ENCODE measurements at regions of chr11 and their contacts with region 1.

Region 1: GRCh38 chr11:6298605-6299004 is 21.7 kb downstream of the CAVIN3 start:
- DNase-seq: peak; percentile 86
- ATAC-seq: peak; percentile 96
- H3K4me3 Mint-ChIP-seq: no peak overlapping the region
- H3K27ac Mint-ChIP-seq: peak overlapping the region; percentile 40; the same call in 1 of the 2 replicates
- H3K4me1 Mint-ChIP-seq: peaks cover 57% of the 10 kb centered on the region
- H3K27me3 Mint-ChIP-seq: no peaks in the 10 kb centered on the region
- CTCF ChIP-seq: peak; percentile 52; the same call in 1 of the 2 replicates

Region 2: GRCh38 chr11:6127881-6128280 is 170.7 kb before region 1 on chr11:
- CTCF ChIA-PET with region 1: no interaction called
- POLR2A ChIA-PET with region 1: no interaction called
- DNase-seq: no peak
- ATAC-seq: no peak
- H3K4me3 Mint-ChIP-seq: no peak overlapping the region
- H3K27ac Mint-ChIP-seq: no peak overlapping the region
- H3K4me1 Mint-ChIP-seq: no peaks in the 10 kb centered on the region
- H3K27me3 Mint-ChIP-seq: no peaks in the 10 kb centered on the region
- CTCF ChIP-seq: no peak

Region 3: GRCh38 chr11:6269994-6270393 is 28.6 kb before region 1 on chr11:
- CTCF ChIA-PET with region 1: interaction called, 20 read pairs
- POLR2A ChIA-PET with region 1: no interaction called
- DNase-seq: peak; percentile 59
- ATAC-seq: peak; percentile 38
- H3K4me3 Mint-ChIP-seq: no peak overlapping the region
- H3K27ac Mint-ChIP-seq: no peak overlapping the region
- H3K4me1 Mint-ChIP-seq: peaks cover 7% of the 10 kb centered on the region; the same call in 1 of the 2 replicates
- H3K27me3 Mint-ChIP-seq: peaks cover 30% of the 10 kb centered on the region
- CTCF ChIP-seq: peak; percentile 60; the same call in 1 of the 2 replicates

Region 4: DNA sequence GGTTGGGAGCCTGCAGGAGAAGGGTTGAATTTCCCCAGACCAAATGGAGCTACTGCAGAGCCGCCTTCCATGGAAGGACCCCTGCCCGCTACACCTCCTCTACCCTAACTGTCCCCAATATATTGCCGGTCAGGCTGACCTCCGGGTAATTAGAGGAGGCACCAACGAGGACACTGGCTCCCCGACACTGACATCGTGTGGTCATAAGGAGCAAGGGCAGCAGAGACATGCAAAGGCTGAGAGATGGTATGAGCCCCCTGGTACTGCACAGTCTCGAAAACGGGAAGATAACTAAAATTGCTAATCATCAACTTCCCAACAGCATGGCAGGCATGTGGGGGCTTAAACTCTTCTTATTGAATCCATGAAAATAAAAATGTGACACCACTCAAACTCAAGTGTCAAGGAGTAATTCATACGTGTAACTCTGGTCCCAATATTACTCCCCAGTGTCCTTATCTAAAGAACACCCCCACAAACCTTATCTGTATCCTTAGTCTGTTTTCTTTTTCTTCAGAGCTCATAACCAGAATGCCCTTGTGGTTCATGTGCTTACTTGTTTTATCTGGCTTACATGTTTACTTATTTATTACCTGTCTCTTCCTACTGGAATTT is 17.3 kb after region 1 on chr11:
- CTCF ChIA-PET with region 1: interaction called, 25 read pairs
- POLR2A ChIA-PET with region 1: interaction called, 3 read pairs
- DNase-seq: peak; percentile 68
- ATAC-seq: peak; percentile 65
- H3K4me3 Mint-ChIP-seq: no peak overlapping the region
- H3K27ac Mint-ChIP-seq: no peak overlapping the region
- H3K4me1 Mint-ChIP-seq: peaks cover 22% of the 10 kb centered on the region
- H3K27me3 Mint-ChIP-seq: peaks cover 9% of the 10 kb centered on the region
- CTCF ChIP-seq: peak; percentile 69

Region 5: DNA sequence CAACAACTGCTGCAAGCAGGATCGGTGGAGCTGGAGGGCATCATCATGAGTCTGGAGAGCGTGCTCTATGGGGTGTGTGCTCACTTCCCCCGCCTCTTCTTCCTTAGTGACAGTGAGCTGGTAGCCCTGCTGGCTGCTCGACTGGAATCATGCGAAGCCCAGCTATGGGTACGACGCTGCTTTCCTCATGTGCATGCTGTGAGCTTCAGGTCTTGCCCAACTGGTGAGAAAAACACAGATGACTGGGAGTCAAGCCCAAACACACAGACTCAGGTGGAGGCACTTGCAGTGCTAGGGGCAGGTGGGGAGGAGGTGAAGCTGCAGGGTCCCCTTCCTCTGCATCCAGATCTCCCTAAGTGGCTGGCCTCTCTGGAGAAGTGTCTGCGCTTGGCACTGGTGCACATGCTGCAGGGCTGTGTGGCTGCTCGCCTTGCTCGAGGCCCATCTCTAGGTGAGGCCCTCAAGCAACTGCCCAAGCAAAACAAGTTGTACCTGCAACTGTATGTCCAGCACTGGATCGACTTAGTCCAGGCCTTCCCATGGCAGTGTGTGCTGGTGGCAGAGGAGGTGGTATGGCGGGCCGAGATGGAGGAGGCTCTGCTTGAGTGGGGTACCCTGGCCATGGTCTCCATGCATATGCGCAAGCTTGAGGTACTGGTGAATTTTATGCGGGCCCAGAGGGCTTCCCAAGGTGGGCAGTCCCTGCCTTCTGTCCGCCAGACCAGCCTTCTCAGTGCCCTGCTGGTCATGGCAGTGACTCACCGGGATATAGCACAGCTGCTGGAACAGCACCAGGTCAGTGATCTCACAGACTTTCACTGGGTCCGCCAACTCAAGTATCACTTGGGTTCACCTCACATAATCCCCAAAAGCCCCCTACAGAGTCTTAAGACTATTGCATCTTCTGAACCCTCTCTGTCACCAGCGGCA is 246.6 kb after region 1 on chr11:
- CTCF ChIA-PET with region 1: no interaction called
- POLR2A ChIA-PET with region 1: no interaction called
- DNase-seq: no peak
- ATAC-seq: no peak; the same call in 1 of the 2 replicates
- H3K4me3 Mint-ChIP-seq: no peak overlapping the region
- H3K27ac Mint-ChIP-seq: no peak overlapping the region
- H3K4me1 Mint-ChIP-seq: no peaks in the 10 kb centered on the region
- H3K27me3 Mint-ChIP-seq: no peaks in the 10 kb centered on the region
- CTCF ChIP-seq: no peak